Naive thymus-derived CD4-positive, alpha-beta T cell (primary cell): ENCODE measurements at regions of chr7 and their contacts with region 1.

Region 1: GRCh38 chr7:518630-519483 is 789 bp downstream of the PDGFA start:
- DNase-seq: peak in 4 of 9 donors; percentile 17 to 66 (median 24)
- ATAC-seq: peak; percentile 18
- H3K4me3 ChIP-seq: peak overlapping the region; percentile 52
- H3K4me3 Mint-ChIP-seq: peak overlapping the region; percentile 59 to 89 (median 80)
- H3K27ac ChIP-seq: no peak overlapping the region
- H3K27ac Mint-ChIP-seq: peak overlapping the region in 2 of 9 donors; percentile 39 to 43
- H3K4me1 ChIP-seq: peaks cover 0 to 30% of the 10 kb centered on the region in 2 donors
- H3K4me1 Mint-ChIP-seq: peaks cover 0 to 21% (median 15%) of the 10 kb centered on the region in 7 donors
- H3K27me3 ChIP-seq: peaks cover 0 to 20% of the 10 kb centered on the region in 2 donors
- H3K27me3 Mint-ChIP-seq: peaks cover 22 to 47% (median 24%) of the 10 kb centered on the region in 5 donors

Region 2: GRCh38 chr7:220151-220841 is 298.6 kb before region 1 on chr7:
- CTCF ChIA-PET with region 1: no interaction called
- POLR2A ChIA-PET with region 1: no interaction called
- intact Hi-C with region 1: no loop called
- DNase-seq: no peak
- ATAC-seq: no peak
- H3K4me3 ChIP-seq: no peak overlapping the region
- H3K4me3 Mint-ChIP-seq: no peak overlapping the region
- H3K27ac ChIP-seq: no peak overlapping the region
- H3K27ac Mint-ChIP-seq: no peak overlapping the region
- H3K4me1 ChIP-seq: no peaks in the 10 kb centered on the region
- H3K4me1 Mint-ChIP-seq: peaks cover 0 to 6% (median 0%) of the 10 kb centered on the region in 7 donors
- H3K27me3 ChIP-seq: no peaks in the 10 kb centered on the region
- H3K27me3 Mint-ChIP-seq: no peaks in the 10 kb centered on the region

Region 3: GRCh38 chr7:362402-363096 is 156.3 kb before region 1 on chr7:
- CTCF ChIA-PET with region 1: no interaction called
- POLR2A ChIA-PET with region 1: no interaction called
- intact Hi-C with region 1: loop called in 1 of 2 experiments (anchors 10 kb)
- DNase-seq: peak in 7 of 9 donors; percentile 57 to 70 (median 61)
- ATAC-seq: peak; percentile 68
- H3K4me3 ChIP-seq: peak overlapping the region; percentile 38
- H3K4me3 Mint-ChIP-seq: peak overlapping the region; percentile 71 to 85 (median 76)
- H3K27ac ChIP-seq: peak overlapping the region; percentile 68
- H3K27ac Mint-ChIP-seq: peak overlapping the region; percentile 86 to 98 (median 94)
- H3K4me1 ChIP-seq: peaks cover 29 to 72% of the 10 kb centered on the region in 2 donors
- H3K4me1 Mint-ChIP-seq: peaks cover 52 to 89% (median 73%) of the 10 kb centered on the region in 7 donors
- H3K27me3 ChIP-seq: no peaks in the 10 kb centered on the region
- H3K27me3 Mint-ChIP-seq: peaks cover 0 to 5% (median 0%) of the 10 kb centered on the region in 5 donors

Region 4: DNA sequence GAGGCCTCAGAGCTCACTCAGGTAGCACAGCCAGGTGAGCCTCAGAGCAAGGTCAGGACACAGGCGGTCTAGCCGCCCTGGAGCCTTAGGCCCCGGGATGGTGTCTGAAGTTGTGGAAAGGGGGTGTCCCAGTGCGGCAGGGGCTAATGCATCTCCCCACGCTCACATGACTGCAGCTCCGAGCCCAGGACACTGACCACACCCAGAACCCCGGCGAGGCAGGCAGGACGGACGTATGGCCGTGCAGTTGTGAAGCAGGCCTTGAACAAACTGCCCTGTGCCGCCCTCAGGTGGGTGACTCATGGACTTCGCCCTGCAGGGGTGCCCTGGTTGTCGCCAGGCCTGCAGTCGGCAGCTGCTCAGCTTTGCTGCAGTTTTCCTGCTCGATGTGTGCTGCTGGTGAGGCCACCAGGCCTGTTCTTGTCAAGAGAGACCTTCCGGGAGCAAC is 213.3 kb after region 1 on chr7:
- CTCF ChIA-PET with region 1: no interaction called
- POLR2A ChIA-PET with region 1: no interaction called
- intact Hi-C with region 1: loop called (anchors 2 to 10 kb)
- DNase-seq: peak in 2 of 9 donors; percentile 14 to 32
- ATAC-seq: no peak
- H3K4me3 ChIP-seq: no peak overlapping the region
- H3K4me3 Mint-ChIP-seq: no peak overlapping the region
- H3K27ac ChIP-seq: no peak overlapping the region
- H3K27ac Mint-ChIP-seq: no peak overlapping the region
- H3K4me1 ChIP-seq: peaks cover 6 to 7% of the 10 kb centered on the region in 2 donors
- H3K4me1 Mint-ChIP-seq: peaks cover 13 to 29% (median 20%) of the 10 kb centered on the region in 7 donors
- H3K27me3 ChIP-seq: no peaks in the 10 kb centered on the region
- H3K27me3 Mint-ChIP-seq: no peaks in the 10 kb centered on the region

Region 5: DNA sequence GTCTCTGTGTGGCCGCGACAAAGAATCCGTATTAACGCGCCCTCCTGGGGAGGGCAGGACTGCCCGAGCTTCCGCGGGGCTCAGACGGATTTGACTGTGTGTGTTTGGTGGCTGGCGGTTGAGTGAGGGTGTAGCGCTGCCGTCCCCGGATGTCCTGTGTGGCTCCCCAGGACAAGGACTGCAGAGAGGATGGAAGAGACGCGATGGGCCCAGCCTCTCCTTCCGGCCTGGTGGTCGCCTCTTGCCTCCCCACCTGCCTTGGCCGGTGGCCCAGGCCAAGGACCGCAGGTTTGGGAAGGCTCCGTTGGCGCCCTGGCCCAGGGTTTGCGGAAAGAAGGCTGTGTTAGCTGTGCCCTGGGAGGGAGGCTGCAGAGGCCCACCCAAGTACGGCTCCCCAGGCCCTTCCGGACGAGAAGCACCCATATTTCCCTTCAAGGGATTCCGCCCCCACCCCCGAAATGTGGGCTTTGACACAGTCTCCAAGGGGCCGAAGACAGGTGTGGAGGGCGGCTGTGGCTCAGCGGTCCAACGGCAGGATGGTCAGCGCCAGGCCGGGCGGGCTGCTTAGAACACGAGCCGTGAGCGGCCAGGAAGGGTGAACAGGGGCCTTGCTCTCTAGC is 716.1 kb after region 1 on chr7:
- CTCF ChIA-PET with region 1: no interaction called
- POLR2A ChIA-PET with region 1: no interaction called
- intact Hi-C with region 1: loop called in 1 of 2 experiments (anchors 5 kb)
- DNase-seq: no peak
- ATAC-seq: no peak
- H3K4me3 ChIP-seq: no peak overlapping the region
- H3K4me3 Mint-ChIP-seq: peak overlapping the region in 9 of 10 donors; percentile 2 to 80 (median 46)
- H3K27ac ChIP-seq: no peak overlapping the region
- H3K27ac Mint-ChIP-seq: peak overlapping the region in 4 of 9 donors; percentile 38 to 88 (median 68)
- H3K4me1 ChIP-seq: peaks cover 0 to 11% of the 10 kb centered on the region in 2 donors
- H3K4me1 Mint-ChIP-seq: peaks cover 19 to 51% (median 37%) of the 10 kb centered on the region in 7 donors
- H3K27me3 ChIP-seq: peaks cover 8 to 29% of the 10 kb centered on the region in 2 donors
- H3K27me3 Mint-ChIP-seq: peaks cover 48 to 65% (median 60%) of the 10 kb centered on the region in 5 donors